Activated naive CD4-positive, alpha-beta T cell treated with anti-CD3 and anti-CD28 coated beads, Interleukin-2, amount 10 ng/mL, durations not matched to agents 7 days and 5 days (primary cell): ENCODE measurements at regions of chr5 and their contacts with region 1.

Region 1: DNA sequence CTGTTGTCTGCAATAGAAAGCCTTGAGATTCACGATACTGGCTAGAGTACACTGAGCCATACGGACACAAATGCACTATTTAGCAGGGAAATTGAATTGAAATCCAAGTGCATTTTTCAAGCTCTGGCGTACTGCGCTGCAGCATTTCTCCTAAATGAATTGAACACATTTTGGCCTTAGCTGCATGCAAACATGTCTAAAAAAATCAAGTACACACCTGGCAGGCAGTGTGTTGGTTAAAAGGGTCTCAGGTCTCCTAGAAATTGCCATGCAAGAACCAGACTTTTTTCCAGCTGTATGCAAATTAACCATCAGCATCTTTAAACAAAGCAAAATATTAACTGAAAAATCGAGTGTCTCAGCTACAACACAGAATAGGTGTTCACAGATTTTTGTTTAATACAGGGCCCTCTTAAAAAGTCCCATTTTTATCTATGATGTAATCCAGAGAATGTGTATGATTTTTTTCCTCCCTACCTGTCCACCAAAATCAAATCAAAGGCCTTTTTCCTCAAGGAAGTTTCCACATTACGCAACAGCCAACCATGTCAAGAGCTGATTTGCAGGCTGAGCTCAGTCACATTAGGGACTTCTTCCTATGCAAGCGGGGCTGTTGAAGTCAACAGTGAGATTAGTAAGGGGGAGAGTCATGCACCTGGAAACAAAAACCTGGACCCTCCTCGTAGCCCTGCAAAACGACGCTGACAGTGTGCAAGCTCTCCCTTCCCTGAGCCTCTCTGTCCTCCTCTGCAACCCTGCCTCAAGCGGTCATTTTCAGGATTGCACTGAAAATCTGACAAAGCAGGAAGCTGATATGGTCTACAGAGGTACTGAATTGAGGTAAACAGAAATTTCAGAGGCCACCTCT is 14.1 kb upstream of the SFXN1 start:
- DNase-seq: peak; percentile 80
- H3K4me3 Mint-ChIP-seq: no peak overlapping the region
- H3K27ac Mint-ChIP-seq: no peak overlapping the region
- H3K4me1 Mint-ChIP-seq: peaks cover 6% of the 10 kb centered on the region
- H3K27me3 Mint-ChIP-seq: peaks cover 22% of the 10 kb centered on the region

Region 2: DNA sequence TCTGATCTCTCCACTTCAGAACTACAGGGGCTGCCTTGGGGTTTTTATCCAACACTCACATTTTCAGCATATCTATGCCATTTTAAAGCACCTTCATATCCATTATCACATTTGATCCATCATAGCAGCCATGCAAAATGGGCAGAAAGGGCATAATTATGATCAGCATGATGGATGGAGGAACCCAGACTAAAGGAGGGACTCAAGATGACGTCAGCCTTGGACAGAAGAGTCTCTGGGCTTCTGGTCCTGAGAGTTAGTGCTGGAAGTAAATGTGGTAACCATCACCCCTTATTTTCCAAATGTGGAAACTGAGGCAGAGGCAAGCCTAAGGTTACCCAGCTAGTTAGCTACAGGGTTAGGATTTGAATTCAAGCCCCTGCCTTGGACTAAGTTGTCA is 293.4 kb before region 1 on chr5:
- CTCF ChIA-PET with region 1: no interaction called
- DNase-seq: no peak
- H3K4me3 Mint-ChIP-seq: no peak overlapping the region
- H3K27ac Mint-ChIP-seq: no peak overlapping the region
- H3K4me1 Mint-ChIP-seq: no peaks in the 10 kb centered on the region
- H3K27me3 Mint-ChIP-seq: peaks cover 6% of the 10 kb centered on the region

Region 3: DNA sequence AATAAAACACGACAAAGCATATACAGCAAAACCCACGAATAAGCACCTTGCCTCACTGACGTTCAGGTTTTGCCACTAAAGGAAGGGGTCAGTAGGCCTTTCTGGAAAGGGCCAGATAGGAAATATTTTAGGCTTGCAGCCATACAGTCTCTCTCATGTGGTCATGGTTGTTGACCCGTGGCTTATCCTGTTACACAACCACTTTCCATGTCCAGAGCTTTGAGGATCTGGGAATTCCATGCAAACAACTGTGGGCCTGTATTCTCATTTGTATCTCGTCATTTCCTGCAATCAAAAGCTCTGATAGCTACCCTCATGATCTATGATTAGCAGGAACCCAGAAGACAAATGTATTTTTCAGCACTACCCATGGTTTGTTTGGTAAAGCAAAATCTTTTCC is 128.6 kb before region 1 on chr5:
- CTCF ChIA-PET with region 1: no interaction called
- DNase-seq: no peak
- H3K4me3 Mint-ChIP-seq: no peak overlapping the region
- H3K27ac Mint-ChIP-seq: no peak overlapping the region
- H3K4me1 Mint-ChIP-seq: no peaks in the 10 kb centered on the region
- H3K27me3 Mint-ChIP-seq: no peaks in the 10 kb centered on the region

Region 4: DNA sequence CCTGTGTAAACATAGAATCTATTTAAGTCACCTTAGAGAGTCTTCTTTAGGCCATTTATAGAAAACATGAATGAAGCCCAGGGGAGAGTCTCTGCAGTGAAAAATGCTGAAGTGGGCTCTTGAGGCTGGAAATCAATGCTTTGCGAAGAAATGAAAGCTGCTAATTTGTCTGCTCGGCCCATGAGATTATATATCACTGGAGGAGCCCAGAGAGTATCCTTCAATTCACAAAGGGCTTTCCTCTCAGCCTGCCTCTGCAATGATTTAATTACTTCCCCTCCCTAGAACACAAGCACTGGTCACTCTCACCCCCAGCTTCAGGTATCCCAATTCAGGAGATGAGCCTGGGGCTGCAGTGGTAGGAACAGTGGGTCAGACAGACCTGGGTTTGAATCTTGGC is 12.1 kb before region 1 on chr5:
- CTCF ChIA-PET with region 1: interaction called, 10 read pairs
- DNase-seq: no peak
- H3K4me3 Mint-ChIP-seq: no peak overlapping the region
- H3K27ac Mint-ChIP-seq: no peak overlapping the region
- H3K4me1 Mint-ChIP-seq: no peaks in the 10 kb centered on the region
- H3K27me3 Mint-ChIP-seq: peaks cover 58% of the 10 kb centered on the region

Region 5: GRCh38 chr5:175478384-175479124 is 14.2 kb after region 1 on chr5 and contains the start of gene SFXN1:
- CTCF ChIA-PET with region 1: interaction called, 35 read pairs
- DNase-seq: peak; percentile 86
- H3K4me3 Mint-ChIP-seq: peak within 1 kb of the TSS; percentile 94
- H3K27ac Mint-ChIP-seq: peak within 1 kb of the TSS; percentile 94
- H3K4me1 Mint-ChIP-seq: peaks cover 48% of the 10 kb centered on the region
- H3K27me3 Mint-ChIP-seq: peaks cover 12% of the 10 kb centered on the region